BJ (cell line): ENCODE measurements at regions of chr14 and their contacts with region 1.

Region 1: DNA sequence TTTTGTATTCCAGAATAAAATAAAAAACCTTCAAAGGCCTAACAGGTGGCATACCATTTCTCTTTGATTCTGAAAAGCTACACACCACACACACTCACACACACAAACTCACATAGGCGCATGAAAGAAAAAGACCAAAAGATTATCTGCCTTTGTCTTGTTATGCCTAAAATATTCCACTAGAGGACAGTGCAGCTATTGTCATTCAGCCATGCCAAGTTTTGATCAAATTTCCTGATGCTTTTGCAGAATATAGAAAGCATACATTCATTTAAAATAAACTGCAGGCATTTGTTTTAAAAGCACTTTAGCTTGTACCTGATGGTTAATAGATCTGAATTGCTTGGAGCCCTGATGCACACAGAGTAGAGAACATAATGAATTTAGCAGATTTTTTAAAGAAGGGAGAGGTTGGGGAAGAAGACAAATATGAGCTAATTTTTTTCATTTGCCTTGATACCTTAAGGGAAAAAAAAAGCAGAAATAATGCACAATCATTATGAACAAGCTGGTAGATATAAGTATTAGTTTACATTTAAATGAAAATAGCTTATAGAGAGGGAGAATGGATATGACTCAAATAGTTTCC is 1766.9 kb upstream of the SEL1L start:
- DNase-seq: no peak
- H3K4me3 ChIP-seq: no peak overlapping the region
- H3K27me3 ChIP-seq: no peaks in the 10 kb centered on the region
- CTCF ChIP-seq: peak; percentile 91

Region 2: DNA sequence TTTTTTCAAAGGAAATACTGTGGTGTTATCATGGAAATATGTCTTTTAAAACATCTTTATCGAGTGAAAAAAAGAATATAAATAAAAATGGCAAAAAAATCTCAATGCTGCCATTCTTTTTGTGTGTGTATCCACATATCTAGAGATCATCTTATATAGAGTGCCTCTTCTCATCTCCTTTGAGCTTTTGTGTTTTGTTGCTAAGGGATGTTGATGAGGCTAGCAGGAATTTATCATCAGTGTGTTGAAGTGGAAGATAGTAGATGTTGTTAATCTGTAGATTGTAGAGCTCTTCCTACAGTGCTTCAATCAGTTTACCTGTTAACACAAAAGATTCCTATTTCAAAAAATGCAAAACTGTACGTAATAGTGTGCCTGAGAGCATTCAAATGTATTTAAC is 28.9 kb before region 1 on chr14:
- CTCF ChIA-PET with region 1: no interaction called
- POLR2A ChIA-PET with region 1: no interaction called
- DNase-seq: no peak
- H3K4me3 ChIP-seq: no peak overlapping the region
- H3K27me3 ChIP-seq: no peaks in the 10 kb centered on the region
- CTCF ChIP-seq: no peak

Region 3: DNA sequence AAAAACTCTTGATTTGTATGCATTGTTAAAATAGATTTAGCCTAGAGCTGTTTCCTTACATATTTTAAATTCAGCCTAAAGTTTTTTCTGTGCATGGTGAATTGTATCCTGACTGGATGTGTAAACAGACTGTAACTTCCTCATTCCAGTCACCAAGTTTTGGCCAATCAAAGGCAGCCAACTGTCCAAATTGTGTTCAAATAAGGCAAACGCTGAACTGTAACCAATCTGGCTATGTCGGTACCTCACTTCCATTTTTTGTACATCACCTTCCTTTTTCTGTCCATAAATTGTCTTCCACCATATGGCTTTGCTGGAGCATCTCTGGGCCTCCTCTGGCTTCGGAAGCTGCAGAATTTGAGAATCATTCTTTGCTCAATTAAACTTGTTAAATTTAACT is 155.0 kb after region 1 on chr14:
- CTCF ChIA-PET with region 1: interaction called, 10 read pairs
- POLR2A ChIA-PET with region 1: no interaction called
- DNase-seq: no peak
- H3K4me3 ChIP-seq: no peak overlapping the region
- H3K27me3 ChIP-seq: no peaks in the 10 kb centered on the region
- CTCF ChIP-seq: no peak

Region 4: DNA sequence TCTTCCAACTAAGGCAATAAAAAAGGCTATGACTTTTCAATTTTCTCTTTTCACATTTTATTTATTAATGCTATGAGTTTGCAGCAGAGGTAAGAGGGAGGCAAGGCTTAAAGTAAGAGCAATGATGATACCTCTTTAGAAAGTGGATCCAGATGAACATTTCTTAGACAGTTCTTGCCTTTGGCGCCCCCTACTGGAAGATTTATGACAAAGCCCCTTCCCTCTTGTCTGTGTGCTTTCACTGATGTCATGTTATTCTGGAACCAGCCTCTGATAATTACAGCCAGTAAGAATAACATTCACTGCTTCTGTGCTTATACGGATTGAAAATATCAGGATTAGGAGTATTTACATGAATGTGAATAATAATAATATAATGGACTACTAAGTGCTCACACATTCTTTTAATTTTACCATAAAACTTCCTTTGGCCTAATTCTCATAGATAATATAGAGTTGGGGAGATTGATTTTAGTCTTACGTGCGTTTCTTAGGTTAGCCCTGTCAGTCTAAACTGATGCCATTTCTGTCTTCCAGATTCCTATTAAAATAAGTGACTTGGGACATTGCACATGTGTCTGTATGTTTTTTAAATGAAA is 163.0 kb after region 1 on chr14:
- CTCF ChIA-PET with region 1: interaction called, 41 read pairs
- POLR2A ChIA-PET with region 1: no interaction called
- DNase-seq: no peak
- H3K4me3 ChIP-seq: no peak overlapping the region
- H3K27me3 ChIP-seq: no peaks in the 10 kb centered on the region
- CTCF ChIP-seq: peak; percentile 75